ENCODE measurements at regions of chr6 and their contacts with region 1.

Region 1: GRCh38 chr6:20846602-20847028 is 312.4 kb downstream of the CDKAL1 start:
- DNase-seq: no peak
- H3K4me3 Mint-ChIP-seq: no peak overlapping the region
- H3K27ac Mint-ChIP-seq: no peak overlapping the region
- H3K4me1 Mint-ChIP-seq: peaks cover 4% of the 10 kb centered on the region
- H3K27me3 Mint-ChIP-seq: no peaks in the 10 kb centered on the region

Region 2: GRCh38 chr6:20589266-20589665 is 257.3 kb before region 1 on chr6:
- CTCF ChIA-PET with region 1: no interaction called
- intact Hi-C with region 1: loop called (anchors 10 kb)
- DNase-seq: no peak
- H3K4me3 Mint-ChIP-seq: no peak overlapping the region
- H3K27ac Mint-ChIP-seq: no peak overlapping the region
- H3K4me1 Mint-ChIP-seq: peaks cover 24% of the 10 kb centered on the region
- H3K27me3 Mint-ChIP-seq: no peaks in the 10 kb centered on the region

Region 3: DNA sequence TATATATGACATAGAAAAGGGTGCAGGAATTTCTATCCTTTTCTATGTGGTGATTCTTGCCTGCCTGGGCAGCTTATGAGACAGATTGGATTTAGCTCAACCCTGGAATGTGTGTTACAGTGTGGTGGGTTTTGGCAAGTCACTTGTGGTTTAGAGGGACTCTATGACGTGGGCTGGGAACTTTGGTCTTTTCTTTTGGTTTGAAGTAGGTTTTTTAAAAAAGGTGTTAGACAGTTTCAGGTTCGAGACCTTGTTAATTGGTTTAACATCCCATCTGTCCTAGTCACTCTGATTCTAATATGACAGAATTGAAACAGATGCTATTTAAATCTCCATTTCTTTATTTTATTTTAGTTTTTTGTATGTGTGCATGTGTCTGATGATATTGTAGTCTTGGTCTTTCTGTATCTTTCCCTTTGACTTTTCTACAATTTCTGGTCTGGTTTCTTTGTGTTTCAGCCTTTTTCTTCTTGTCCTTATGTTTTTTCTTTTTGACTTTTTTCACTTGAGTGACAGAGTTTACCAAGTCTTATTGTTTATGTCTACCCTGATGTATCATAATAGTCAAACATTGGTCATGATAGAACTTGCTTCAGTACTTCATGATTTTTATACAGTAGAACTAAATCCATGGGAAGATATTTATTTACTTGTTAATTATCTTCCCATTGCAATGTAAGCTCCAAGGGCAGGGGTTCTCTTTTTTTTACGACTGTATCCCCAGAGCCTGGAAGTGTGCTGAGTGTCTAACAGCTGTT is 138.1 kb before region 1 on chr6:
- CTCF ChIA-PET with region 1: no interaction called
- intact Hi-C with region 1: no loop called
- DNase-seq: peak; percentile 62
- H3K4me3 Mint-ChIP-seq: no peak overlapping the region
- H3K27ac Mint-ChIP-seq: no peak overlapping the region
- H3K4me1 Mint-ChIP-seq: peaks cover 54% of the 10 kb centered on the region
- H3K27me3 Mint-ChIP-seq: no peaks in the 10 kb centered on the region

Region 4: GRCh38 chr6:20833881-20834515 is 12.6 kb before region 1 on chr6:
- CTCF ChIA-PET with region 1: no interaction called
- intact Hi-C with region 1: no loop called
- DNase-seq: no peak
- H3K4me3 Mint-ChIP-seq: no peak overlapping the region
- H3K27ac Mint-ChIP-seq: no peak overlapping the region
- H3K4me1 Mint-ChIP-seq: peaks cover 32% of the 10 kb centered on the region
- H3K27me3 Mint-ChIP-seq: no peaks in the 10 kb centered on the region

Region 5: GRCh38 chr6:21123507-21124436 is 277.2 kb after region 1 on chr6:
- CTCF ChIA-PET with region 1: no interaction called
- intact Hi-C with region 1: no loop called
- DNase-seq: no peak
- H3K4me3 Mint-ChIP-seq: no peak overlapping the region
- H3K27ac Mint-ChIP-seq: no peak overlapping the region
- H3K4me1 Mint-ChIP-seq: no peaks in the 10 kb centered on the region
- H3K27me3 Mint-ChIP-seq: no peaks in the 10 kb centered on the region

Measured in activated naive CD4-positive, alpha-beta T cell treated with anti-CD3 and anti-CD28 coated beads for 36 hours (primary cell).